Activated naive CD4-positive, alpha-beta T cell treated with anti-CD3 and anti-CD28 coated beads for 36 hours (primary cell): ENCODE measurements at regions of chr17 and their contacts with region 1.

Region 1: GRCh38 chr17:68205251-68205807 is 42.5 kb upstream of the AMZ2 start:
- DNase-seq: peak; percentile 93
- H3K4me3 Mint-ChIP-seq: peak overlapping the region; percentile 87
- H3K27ac Mint-ChIP-seq: peak overlapping the region; percentile 79
- H3K4me1 Mint-ChIP-seq: peaks cover 12% of the 10 kb centered on the region
- H3K27me3 Mint-ChIP-seq: peaks cover 2% of the 10 kb centered on the region

Region 2: GRCh38 chr17:68101075-68101992 is 104.0 kb before region 1 on chr17:
- CTCF ChIA-PET with region 1: interaction called, 3 read pairs
- intact Hi-C with region 1: loop called (anchors 2 kb)
- DNase-seq: peak; percentile 63
- H3K4me3 Mint-ChIP-seq: peak overlapping the region; percentile 90
- H3K27ac Mint-ChIP-seq: peak overlapping the region; percentile 48
- H3K4me1 Mint-ChIP-seq: peaks cover 25% of the 10 kb centered on the region
- H3K27me3 Mint-ChIP-seq: no peaks in the 10 kb centered on the region

Region 3: GRCh38 chr17:68141050-68141449 is 64.3 kb before region 1 on chr17:
- CTCF ChIA-PET with region 1: no interaction called
- intact Hi-C with region 1: no loop called
- DNase-seq: no peak
- H3K4me3 Mint-ChIP-seq: no peak overlapping the region
- H3K27ac Mint-ChIP-seq: no peak overlapping the region
- H3K4me1 Mint-ChIP-seq: no peaks in the 10 kb centered on the region
- H3K27me3 Mint-ChIP-seq: no peaks in the 10 kb centered on the region

Region 4: DNA sequence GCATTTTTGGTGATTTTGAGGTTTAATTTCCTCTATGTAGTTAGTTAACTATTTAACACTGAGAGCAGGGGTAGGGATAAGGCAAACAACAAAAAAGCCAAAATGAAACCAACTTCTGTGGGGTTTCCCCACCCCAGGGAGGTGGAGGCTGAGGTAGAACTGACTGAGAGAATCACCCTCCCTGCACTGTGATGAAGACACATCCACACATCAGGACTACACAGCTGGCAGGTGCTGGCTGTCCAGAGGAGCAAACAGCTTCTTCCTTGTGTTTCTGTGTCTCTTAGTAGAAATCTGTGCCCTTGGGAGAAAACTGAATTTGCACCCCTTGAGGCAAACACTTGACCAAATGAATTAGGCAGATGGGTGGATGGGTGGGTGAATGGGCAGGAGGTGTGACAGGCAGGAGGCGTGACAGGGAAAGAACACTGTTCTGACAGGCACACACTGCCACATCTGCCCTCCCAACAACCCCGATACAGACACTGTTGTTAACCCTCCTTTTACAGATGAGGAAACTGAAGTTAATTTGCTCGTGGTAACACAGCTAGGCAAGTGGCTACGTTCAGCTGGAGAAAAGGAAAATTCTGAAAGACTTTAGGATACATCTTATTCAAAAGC is 20.4 kb before region 1 on chr17:
- CTCF ChIA-PET with region 1: interaction called, 58 read pairs
- intact Hi-C with region 1: loop called (anchors 1 kb)
- DNase-seq: peak; percentile 78
- H3K4me3 Mint-ChIP-seq: peak overlapping the region; percentile 40
- H3K27ac Mint-ChIP-seq: peak overlapping the region; percentile 68
- H3K4me1 Mint-ChIP-seq: peaks cover 48% of the 10 kb centered on the region
- H3K27me3 Mint-ChIP-seq: no peaks in the 10 kb centered on the region

Region 5: GRCh38 chr17:68247445-68248198 is 42.3 kb after region 1 on chr17 and contains the start of gene AMZ2:
- CTCF ChIA-PET with region 1: interaction called, 7 read pairs
- intact Hi-C with region 1: loop called (anchors 1 kb)
- DNase-seq: peak; percentile 94
- H3K4me3 Mint-ChIP-seq: peak within 1 kb of the TSS; percentile 89
- H3K27ac Mint-ChIP-seq: peak within 1 kb of the TSS; percentile 95
- H3K4me1 Mint-ChIP-seq: peaks cover 31% of the 10 kb centered on the region
- H3K27me3 Mint-ChIP-seq: no peaks in the 10 kb centered on the region
- total RNA-seq, gene AMZ2: 190 to 195 TPM

Region 6: DNA sequence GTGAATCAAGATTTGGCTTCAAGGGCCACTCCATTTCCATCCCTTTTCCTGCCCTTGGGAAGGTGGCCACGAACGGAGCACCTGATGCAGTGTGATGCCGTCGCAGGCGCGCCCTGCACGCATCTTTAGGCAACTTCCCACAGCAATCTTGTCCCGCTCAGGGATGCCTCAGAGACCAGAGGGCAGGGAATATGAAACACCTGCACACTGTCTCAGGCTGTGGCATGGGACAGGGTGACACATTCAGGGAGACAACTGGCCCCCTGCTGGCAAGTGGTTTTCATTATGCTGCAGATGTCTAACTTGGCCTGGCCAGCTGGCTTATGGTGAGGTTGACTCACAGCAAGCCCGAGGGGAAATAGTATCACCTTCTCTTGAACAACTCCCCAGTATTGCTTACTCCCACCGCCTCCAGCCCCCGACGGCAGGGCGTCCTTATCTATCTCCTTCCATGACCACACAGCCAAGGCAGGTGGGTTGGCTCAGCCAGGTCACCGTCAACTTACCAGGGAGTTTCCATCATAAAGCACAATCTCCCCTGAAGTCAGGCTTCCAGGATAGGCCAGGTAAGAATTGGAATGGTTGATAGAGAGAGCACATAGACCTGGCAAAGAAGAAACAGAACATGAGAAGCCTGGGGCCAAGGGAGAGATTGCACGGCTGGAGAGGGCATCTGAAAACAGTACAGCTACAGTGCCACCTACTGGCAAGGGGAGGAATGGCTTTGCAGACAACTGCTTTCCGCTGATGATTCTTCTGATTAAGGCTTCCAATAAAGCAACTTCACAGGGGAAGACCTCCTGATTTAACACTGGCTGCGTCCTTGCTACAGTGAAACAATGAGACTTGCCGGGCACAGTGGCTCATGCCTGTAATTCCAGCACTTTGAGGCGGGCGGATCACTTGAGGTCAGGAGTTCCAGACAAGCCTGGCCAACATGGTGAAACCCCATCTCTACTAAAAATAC is 230.8 kb after region 1 on chr17:
- CTCF ChIA-PET with region 1: interaction called, 10 read pairs
- intact Hi-C with region 1: loop called (anchors 2 kb)
- DNase-seq: peak; percentile 94
- H3K4me3 Mint-ChIP-seq: no peak overlapping the region
- H3K27ac Mint-ChIP-seq: no peak overlapping the region
- H3K4me1 Mint-ChIP-seq: peaks cover 35% of the 10 kb centered on the region
- H3K27me3 Mint-ChIP-seq: no peaks in the 10 kb centered on the region